Activated T-helper 1 cell treated with anti-CD3 and anti-CD28 coated beads, Interleukin-12 subunit alpha, Interleukin-12 subunit beta, Interleukin-2, Interleukin-4 antibody, amounts not matched to agents 30 ng/mL and 10 ng/mL and 1 ng/mL, durations not matched to agents 14 hours and 24 hours and 36 hours (primary cell): ENCODE measurements at regions of chr20 and their contacts with region 1.

Region 1: GRCh38 chr20:50460460-50461267 is 49.5 kb upstream of the PTPN1 start:
- DNase-seq: peak; percentile 76
- H3K4me3 Mint-ChIP-seq: no peak overlapping the region
- H3K27ac Mint-ChIP-seq: no peak overlapping the region
- H3K4me1 Mint-ChIP-seq: peaks cover 25% of the 10 kb centered on the region
- H3K27me3 Mint-ChIP-seq: peaks cover 4% of the 10 kb centered on the region

Region 2: DNA sequence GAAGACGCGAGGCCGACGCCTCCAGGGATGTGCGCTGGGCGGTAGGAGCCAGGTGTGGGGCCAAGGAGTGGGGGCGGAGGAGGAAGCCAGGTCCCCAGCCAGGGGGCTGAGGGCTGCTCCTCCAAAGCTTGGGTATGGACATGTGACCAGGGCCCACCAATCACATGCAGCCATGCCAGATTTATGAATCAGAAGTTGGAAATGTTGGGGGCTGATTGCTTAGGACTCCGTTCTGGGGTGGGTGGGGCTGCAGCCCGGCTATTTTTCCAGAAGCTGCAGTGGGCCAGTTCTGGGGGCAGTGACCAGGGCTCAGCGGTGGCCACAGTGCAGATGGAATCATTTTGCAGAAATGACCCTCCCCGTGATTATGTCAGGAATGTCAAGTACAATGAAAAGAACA is 174.1 kb before region 1 on chr20:
- intact Hi-C with region 1: loop called (anchors 5 kb)
- DNase-seq: no peak
- H3K4me3 Mint-ChIP-seq: no peak overlapping the region
- H3K27ac Mint-ChIP-seq: no peak overlapping the region
- H3K4me1 Mint-ChIP-seq: peaks cover 31% of the 10 kb centered on the region
- H3K27me3 Mint-ChIP-seq: peaks cover 3% of the 10 kb centered on the region

Region 3: GRCh38 chr20:50478162-50479036 is 17.7 kb after region 1 on chr20:
- intact Hi-C with region 1: no loop called
- DNase-seq: peak; percentile 74
- H3K4me3 Mint-ChIP-seq: no peak overlapping the region
- H3K27ac Mint-ChIP-seq: no peak overlapping the region
- H3K4me1 Mint-ChIP-seq: peaks cover 28% of the 10 kb centered on the region
- H3K27me3 Mint-ChIP-seq: peaks cover 2% of the 10 kb centered on the region

Region 4: DNA sequence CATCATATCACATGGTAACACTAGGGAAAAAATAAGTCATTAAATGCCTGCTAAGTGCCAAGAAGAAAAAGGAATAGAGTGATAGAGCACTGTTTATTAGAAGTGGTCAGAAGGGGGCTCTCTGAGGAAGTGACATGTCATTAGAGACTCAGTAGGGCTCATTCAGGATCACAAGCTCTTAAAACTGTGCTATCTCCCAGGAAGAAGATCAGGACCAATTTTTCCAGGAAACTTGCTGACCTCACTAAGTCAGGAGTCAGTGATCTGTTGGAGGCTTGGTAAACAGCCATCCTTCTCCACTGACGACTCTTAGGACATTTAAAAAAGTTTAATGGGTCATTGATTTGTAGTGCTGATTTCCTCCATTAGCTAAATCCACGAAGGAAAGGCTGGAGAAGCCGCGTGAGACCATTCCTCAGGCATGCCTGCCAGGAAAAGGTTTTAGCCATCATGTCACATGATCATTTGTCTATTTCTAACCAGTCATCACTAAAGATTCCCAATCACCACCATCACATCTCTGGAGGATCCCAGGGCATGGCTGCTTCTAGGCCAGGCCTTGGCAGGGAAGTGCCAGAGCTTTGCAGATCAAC is 43.7 kb after region 1 on chr20:
- intact Hi-C with region 1: no loop called
- DNase-seq: no peak
- H3K4me3 Mint-ChIP-seq: no peak overlapping the region
- H3K27ac Mint-ChIP-seq: no peak overlapping the region
- H3K4me1 Mint-ChIP-seq: peaks cover 21% of the 10 kb centered on the region
- H3K27me3 Mint-ChIP-seq: peaks cover 3% of the 10 kb centered on the region